HepG2 (cell line): ENCODE measurements at regions of chr3 and their contacts with region 1.

Region 1: DNA sequence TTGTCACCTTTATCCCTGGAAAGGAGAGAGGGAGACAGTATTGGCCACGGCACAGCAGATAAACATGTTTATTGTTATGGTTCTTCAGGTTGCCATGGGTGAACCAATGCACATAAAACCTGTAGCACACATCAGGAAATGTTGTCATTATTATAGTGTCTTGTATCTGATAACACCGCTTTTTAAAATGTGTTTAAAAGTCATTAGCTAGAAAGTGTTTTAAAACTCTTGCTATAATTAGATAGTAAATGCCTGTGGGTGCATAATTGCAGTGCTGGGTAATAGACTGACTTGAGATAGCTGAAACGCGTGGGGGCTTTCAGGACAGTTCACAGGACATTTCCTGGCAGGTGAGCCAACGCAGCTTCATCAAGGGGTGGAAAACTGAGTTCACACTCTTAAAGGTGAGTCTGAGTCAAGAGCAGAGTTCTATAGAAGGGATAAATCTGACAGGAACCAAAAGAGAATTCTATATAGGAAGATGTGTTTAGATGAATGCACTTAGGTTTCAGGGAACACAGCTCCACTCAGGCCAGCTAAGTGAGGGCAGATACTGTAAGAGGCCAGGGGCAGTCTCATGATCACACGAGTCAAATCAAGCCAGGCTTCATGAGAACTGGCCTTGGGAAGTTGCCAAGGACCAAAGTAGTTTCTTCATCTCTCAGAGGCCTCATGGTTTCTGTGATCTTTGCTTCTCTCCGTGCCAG is 35.6 kb upstream of the PPP4R2 start:
- DNase-seq: peak; percentile 86
- ATAC-seq: peak; percentile 62
- H3K4me3 ChIP-seq: no peak overlapping the region
- H3K27ac ChIP-seq: peak overlapping the region; percentile 79
- H3K4me1 ChIP-seq: peaks cover 89% of the 10 kb centered on the region
- H3K27me3 ChIP-seq: no peaks in the 10 kb centered on the region
- CTCF ChIP-seq: no peak
- EP300 ChIP-seq: peak in 1 of 2 experiments; percentile 46; a peak in 2 of 4 replicates
- POLR2A ChIP-seq: no peak
- RAD21 ChIP-seq: no peak

Region 2: GRCh38 chr3:72938471-72939265 is 22.3 kb before region 1 on chr3:
- CTCF ChIA-PET with region 1: no interaction called
- POLR2A ChIA-PET with region 1: no interaction called
- in situ Hi-C with region 1: no loop called
- intact Hi-C with region 1: loop called (anchors 2 kb)
- DNase-seq: peak; percentile 81
- ATAC-seq: peak; percentile 98
- H3K4me3 ChIP-seq: peak overlapping the region; percentile 31 to 41 (median 36); a peak in 4 of 6 replicates
- H3K27ac ChIP-seq: peak overlapping the region; percentile 58
- H3K4me1 ChIP-seq: peaks cover 16% of the 10 kb centered on the region
- H3K27me3 ChIP-seq: no peaks in the 10 kb centered on the region
- CTCF ChIP-seq: peak; percentile 60
- EP300 ChIP-seq: peak in 1 of 2 experiments; percentile 57; a peak in 1 of 4 replicates
- POLR2A ChIP-seq: no peak
- RAD21 ChIP-seq: peak; percentile 62